ENCODE measurements at regions of chr1 and their contacts with region 1.

Region 1: GRCh38 chr1:40404670-40405462 is 31.3 kb downstream of the SMAP2 start:
- DNase-seq: peak; percentile 76
- ATAC-seq: peak; percentile 80
- H3K4me3 ChIP-seq: no peak overlapping the region
- H3K27ac ChIP-seq: peak overlapping the region; percentile 5; the same call in 1 of the 2 replicates
- H3K4me1 ChIP-seq: peaks cover 6% of the 10 kb centered on the region; the same call in 1 of the 2 replicates
- H3K27me3 ChIP-seq: no peaks in the 10 kb centered on the region
- CTCF ChIP-seq: peak; percentile 85

Region 2: GRCh38 chr1:40079774-40080400 is 325.0 kb before region 1 on chr1:
- CTCF ChIA-PET with region 1: interaction called, 4 read pairs
- POLR2A ChIA-PET with region 1: no interaction called
- intact Hi-C with region 1: loop called (anchors 2 kb)
- DNase-seq: no peak
- ATAC-seq: no peak
- H3K4me3 ChIP-seq: no peak overlapping the region
- H3K27ac ChIP-seq: no peak overlapping the region
- H3K4me1 ChIP-seq: peaks cover 15% of the 10 kb centered on the region
- H3K27me3 ChIP-seq: no peaks in the 10 kb centered on the region
- CTCF ChIP-seq: no peak

Region 3: GRCh38 chr1:40373338-40374283 is 31.3 kb before region 1 on chr1 and contains the start of gene SMAP2:
- CTCF ChIA-PET with region 1: interaction called, 6 read pairs
- POLR2A ChIA-PET with region 1: no interaction called
- intact Hi-C with region 1: loop called (anchors 5 kb)
- DNase-seq: peak; percentile 96
- ATAC-seq: peak; percentile 81
- H3K4me3 ChIP-seq: peak within 1 kb of the TSS; percentile 81
- H3K27ac ChIP-seq: peak within 1 kb of the TSS; percentile 92
- H3K4me1 ChIP-seq: peaks cover 27% of the 10 kb centered on the region
- H3K27me3 ChIP-seq: no peaks in the 10 kb centered on the region
- CTCF ChIP-seq: no peak
- total RNA-seq, gene SMAP2: 48.1 and 51.0 TPM in 2 replicates

Measured in PC-3 (cell line).